ENCODE measurements at regions of chr9 and their contacts with region 1.

Region 1: DNA sequence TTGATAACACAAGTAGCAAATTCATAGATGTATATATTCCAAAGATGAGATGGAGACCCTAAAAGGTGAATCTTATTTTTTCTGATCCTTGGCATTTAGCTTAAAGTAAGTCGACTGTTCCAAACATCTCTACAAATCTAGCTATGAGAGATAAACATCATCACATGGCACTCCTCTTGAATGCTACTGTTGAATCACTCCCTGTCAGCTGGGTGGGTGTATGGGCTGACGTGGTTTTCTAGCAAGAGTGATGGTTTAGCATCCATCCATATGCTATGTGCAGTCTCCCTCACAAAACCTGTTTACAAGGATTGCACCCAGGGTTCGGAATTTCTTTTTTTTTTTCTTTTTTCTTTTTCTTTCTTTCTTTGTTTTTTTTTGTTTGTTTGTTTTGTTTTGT is 13.8 kb downstream of the ACO1 start:
- DNase-seq: no peak
- H3K4me3 ChIP-seq: no peak overlapping the region
- H3K27ac ChIP-seq: no peak overlapping the region
- H3K27me3 ChIP-seq: no peaks in the 10 kb centered on the region
- CTCF ChIP-seq: no peak

Region 2: GRCh38 chr9:32431940-32432555 is 33.8 kb after region 1 on chr9:
- CTCF ChIA-PET with region 1: interaction called, 13 read pairs
- POLR2A ChIA-PET with region 1: interaction called, 3 read pairs
- DNase-seq: no peak
- H3K4me3 ChIP-seq: no peak overlapping the region
- H3K27ac ChIP-seq: no peak overlapping the region
- H3K27me3 ChIP-seq: no peaks in the 10 kb centered on the region
- CTCF ChIP-seq: peak; percentile 63

Region 3: DNA sequence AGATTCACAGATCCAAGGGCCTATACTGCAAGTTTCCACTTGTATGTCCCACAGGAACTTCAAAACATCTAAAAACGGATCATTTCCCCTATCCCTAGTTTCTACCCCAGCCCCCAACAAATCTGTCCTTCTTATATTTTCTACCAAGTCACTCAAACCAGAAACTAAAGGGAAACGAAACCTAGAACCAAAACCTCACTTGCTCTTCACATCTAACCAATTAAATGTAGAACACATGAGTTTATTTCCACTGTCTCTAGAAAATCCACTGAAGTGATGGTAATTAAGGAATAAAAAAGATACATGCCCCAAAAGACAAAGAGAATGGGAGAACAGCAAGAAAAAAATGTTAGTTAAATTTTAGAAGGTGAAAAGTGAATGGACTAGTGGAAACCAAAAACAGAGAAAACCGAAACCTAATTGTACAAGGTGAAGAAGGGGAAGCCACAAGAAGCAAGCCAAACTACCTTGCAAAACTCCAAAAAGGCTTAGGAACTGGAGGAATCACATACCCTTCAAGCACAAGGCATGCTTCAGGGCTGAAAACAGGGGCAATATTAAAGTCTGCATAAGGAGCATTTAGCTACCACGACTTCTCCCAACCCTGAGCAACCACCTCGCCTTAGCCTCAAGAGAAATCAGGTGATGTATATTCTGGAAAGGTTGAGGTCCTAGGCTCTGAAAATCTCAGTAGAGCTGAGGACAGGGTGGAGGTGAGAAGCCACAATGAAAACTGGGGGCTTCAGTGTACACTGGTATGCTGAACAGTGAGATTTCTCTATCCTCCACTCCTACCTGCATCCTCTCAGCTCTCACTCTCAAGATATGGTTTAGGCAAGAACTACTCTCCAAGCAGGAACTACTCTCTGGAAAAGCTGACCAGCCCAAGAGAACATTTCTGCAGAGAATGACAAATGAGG is 667.2 kb after region 1 on chr9:
- CTCF ChIA-PET with region 1: interaction called, 10 read pairs
- POLR2A ChIA-PET with region 1: no interaction called
- DNase-seq: no peak
- H3K4me3 ChIP-seq: no peak overlapping the region
- H3K27ac ChIP-seq: no peak overlapping the region
- H3K27me3 ChIP-seq: no peaks in the 10 kb centered on the region
- CTCF ChIP-seq: no peak